ENCODE measurements at regions of chr5 and their contacts with region 1.

Region 1: GRCh38 chr5:124421584-124421983 is 324.9 kb downstream of the ZNF608 start:
- DNase-seq: peak; percentile 28
- ATAC-seq: peak; percentile 36
- H3K4me3 ChIP-seq: no peak overlapping the region
- H3K4me3 Mint-ChIP-seq: peak overlapping the region; percentile 42
- H3K27ac ChIP-seq: no peak overlapping the region
- H3K27ac Mint-ChIP-seq: no peak overlapping the region
- H3K4me1 ChIP-seq: peaks cover 23 to 25% of the 10 kb centered on the region in 2 donors
- H3K4me1 Mint-ChIP-seq: peaks cover 30% of the 10 kb centered on the region
- H3K27me3 ChIP-seq: no peaks in the 10 kb centered on the region
- H3K27me3 Mint-ChIP-seq: no peaks in the 10 kb centered on the region
- CTCF ChIP-seq: no peak

Region 2: GRCh38 chr5:124410539-124411488 is 10.8 kb before region 1 on chr5:
- CTCF ChIA-PET with region 1: no interaction called
- POLR2A ChIA-PET with region 1: no interaction called
- intact Hi-C with region 1: loop called (anchors 1 kb)
- DNase-seq: peak; percentile 72
- ATAC-seq: peak; percentile 96
- H3K4me3 ChIP-seq: peak overlapping the region in 2 of 5 experiments; percentile 14 to 24
- H3K4me3 Mint-ChIP-seq: peak overlapping the region; percentile 60
- H3K27ac ChIP-seq: no peak overlapping the region
- H3K27ac Mint-ChIP-seq: no peak overlapping the region
- H3K4me1 ChIP-seq: peaks cover 22 to 24% of the 10 kb centered on the region in 2 donors
- H3K4me1 Mint-ChIP-seq: peaks cover 21% of the 10 kb centered on the region
- H3K27me3 ChIP-seq: no peaks in the 10 kb centered on the region
- H3K27me3 Mint-ChIP-seq: no peaks in the 10 kb centered on the region
- CTCF ChIP-seq: no peak